Activated CD8-positive, alpha-beta T cell treated with anti-CD3 and anti-CD28 coated beads, Interleukin-2, amount 10 ng/mL, durations not matched to agents 7 days and 5 days (primary cell): ENCODE measurements at regions of chr2 and their contacts with region 1.

Region 1: DNA sequence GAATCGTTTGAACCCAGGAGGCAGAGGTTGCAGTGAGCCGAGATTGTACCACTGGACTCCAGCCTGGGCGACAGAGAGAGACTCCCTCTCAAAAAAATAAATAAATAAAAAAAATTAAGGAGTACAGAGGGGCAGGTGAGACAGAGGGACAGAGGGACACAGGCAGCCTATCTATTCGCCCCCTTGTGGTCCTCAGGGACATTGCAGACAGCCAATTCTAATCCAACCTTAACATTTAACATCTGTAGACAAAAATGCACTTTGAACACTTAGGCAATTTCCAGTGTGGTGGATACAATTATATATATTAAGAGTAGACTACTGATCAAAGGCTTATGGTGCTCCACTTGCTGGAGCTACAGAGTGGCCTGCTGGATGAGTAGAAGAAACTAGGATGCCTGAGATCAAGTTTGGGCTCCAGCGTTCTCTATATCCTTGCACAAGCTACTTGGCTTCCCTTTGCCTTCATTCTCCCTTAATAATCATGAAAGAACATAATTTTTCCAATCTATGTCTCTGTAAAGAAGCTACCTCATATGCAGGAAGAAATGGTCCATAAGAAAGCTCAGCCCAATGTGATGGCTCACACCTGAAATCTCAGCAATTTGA is 8.2 kb upstream of the SMARCAL1 start:
- DNase-seq: peak; percentile 63
- ATAC-seq: peak; percentile 88
- H3K4me3 Mint-ChIP-seq: no peak overlapping the region
- H3K27ac Mint-ChIP-seq: no peak overlapping the region
- H3K4me1 Mint-ChIP-seq: no peaks in the 10 kb centered on the region
- H3K27me3 Mint-ChIP-seq: peaks cover 25% of the 10 kb centered on the region

Region 2: DNA sequence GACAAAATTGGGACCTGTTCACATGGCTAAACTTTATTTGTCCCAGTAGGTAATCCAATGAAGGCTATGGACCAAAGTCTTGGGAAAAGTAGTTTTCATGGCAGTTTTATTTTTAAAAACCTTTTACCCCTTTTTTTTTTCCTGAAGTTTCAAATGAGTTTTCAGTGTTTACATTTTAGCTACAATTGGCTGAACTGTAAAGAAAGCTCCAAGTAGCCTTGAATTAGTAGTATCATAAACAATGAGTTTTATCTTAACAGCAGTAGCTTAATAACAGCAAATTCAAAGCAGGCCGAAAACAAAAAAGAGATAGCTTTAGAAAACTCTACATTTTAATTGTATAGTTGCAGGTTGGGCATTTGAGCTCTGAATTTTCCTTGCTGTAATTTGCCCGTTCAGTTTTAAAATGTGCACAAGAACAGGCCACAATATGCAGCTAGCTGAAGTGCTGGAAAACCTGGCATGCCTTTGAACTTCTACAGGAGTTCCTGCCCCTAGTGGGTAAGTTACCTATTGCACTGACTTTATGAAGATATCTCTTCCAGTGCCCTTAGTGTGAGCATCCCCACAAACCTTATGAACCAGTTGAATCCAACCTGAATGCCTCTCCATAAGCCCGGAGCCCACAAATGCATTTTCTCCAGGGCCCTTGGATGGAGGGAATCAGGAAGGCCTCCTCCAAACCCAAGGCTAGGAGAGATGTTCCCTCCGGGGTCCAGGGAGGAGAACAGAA is 188.3 kb before region 1 on chr2:
- CTCF ChIA-PET with region 1: interaction called, 10 read pairs
- POLR2A ChIA-PET with region 1: no interaction called
- DNase-seq: peak; percentile 18
- ATAC-seq: no peak
- H3K4me3 Mint-ChIP-seq: no peak overlapping the region
- H3K27ac Mint-ChIP-seq: no peak overlapping the region
- H3K4me1 Mint-ChIP-seq: peaks cover 41% of the 10 kb centered on the region
- H3K27me3 Mint-ChIP-seq: no peaks in the 10 kb centered on the region

Region 3: DNA sequence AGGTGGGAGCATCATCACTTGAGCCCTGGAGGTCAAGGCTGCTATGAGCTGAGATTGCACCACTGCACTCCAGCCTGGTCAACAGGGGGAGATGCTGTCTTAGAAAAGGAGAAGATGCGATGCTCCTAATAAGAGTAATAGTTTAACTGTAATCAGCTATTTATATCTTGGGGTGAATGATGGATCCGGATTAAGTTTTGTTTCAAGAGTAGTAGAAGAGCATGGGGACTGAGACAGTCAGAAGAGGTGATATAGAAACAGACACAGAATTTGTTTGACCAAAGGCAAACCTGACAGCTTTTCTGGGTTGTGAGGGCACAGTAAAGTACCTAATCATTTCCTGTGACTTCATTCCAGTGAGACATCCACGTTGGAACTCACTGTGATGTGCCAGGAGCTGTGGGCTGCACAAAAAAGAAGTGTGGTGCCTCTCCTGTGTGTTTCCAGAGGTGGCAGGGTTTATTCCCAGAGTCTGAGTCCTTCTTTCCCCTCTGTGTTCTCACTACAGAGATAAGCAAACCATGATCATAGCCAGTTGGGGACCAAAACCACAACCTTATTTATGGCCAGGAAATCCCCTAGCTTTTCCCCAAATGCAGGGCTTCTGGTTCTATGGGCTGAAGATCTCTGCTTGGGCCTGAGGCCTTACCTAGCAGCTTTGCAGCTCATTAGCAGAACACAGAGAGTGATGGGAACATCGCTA is 181.3 kb before region 1 on chr2:
- CTCF ChIA-PET with region 1: interaction called, 25 read pairs
- POLR2A ChIA-PET with region 1: interaction called, 7 read pairs
- DNase-seq: no peak
- ATAC-seq: peak; percentile 27
- H3K4me3 Mint-ChIP-seq: no peak overlapping the region
- H3K27ac Mint-ChIP-seq: no peak overlapping the region
- H3K4me1 Mint-ChIP-seq: peaks cover 48% of the 10 kb centered on the region
- H3K27me3 Mint-ChIP-seq: no peaks in the 10 kb centered on the region

Region 4: DNA sequence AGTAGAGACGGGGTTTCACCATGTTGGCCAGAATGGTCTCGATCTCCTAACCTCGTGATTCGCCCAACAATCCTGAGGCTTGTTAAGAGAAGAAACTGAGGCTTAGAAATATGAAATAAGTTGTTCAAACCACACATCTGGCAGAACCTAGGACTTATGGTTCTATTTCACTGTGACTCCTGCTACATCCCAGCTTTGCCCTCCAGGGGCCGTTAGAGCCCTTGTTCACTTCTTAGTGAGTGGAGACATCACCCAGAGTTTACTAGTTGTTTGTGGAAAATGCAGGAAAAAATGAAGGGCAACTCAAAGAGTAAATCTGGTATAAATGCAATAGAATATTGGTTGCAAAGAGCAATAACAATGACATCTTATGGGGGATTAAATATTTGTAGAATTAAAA is 75.8 kb before region 1 on chr2:
- CTCF ChIA-PET with region 1: interaction called, 22 read pairs
- POLR2A ChIA-PET with region 1: no interaction called
- DNase-seq: no peak
- ATAC-seq: no peak
- H3K4me3 Mint-ChIP-seq: no peak overlapping the region
- H3K27ac Mint-ChIP-seq: no peak overlapping the region
- H3K4me1 Mint-ChIP-seq: no peaks in the 10 kb centered on the region
- H3K27me3 Mint-ChIP-seq: peaks cover 4% of the 10 kb centered on the region

Region 5: GRCh38 chr2:216352653-216353270 is 51.4 kb before region 1 on chr2:
- CTCF ChIA-PET with region 1: interaction called, 20 read pairs
- POLR2A ChIA-PET with region 1: no interaction called
- DNase-seq: peak; percentile 53
- ATAC-seq: peak; percentile 77
- H3K4me3 Mint-ChIP-seq: peak overlapping the region; percentile 59
- H3K27ac Mint-ChIP-seq: peak overlapping the region; percentile 98
- H3K4me1 Mint-ChIP-seq: peaks cover 63% of the 10 kb centered on the region
- H3K27me3 Mint-ChIP-seq: no peaks in the 10 kb centered on the region

Region 6: GRCh38 chr2:216416571-216417307 is 12.6 kb after region 1 on chr2:
- CTCF ChIA-PET with region 1: interaction called, 20 read pairs
- POLR2A ChIA-PET with region 1: no interaction called
- DNase-seq: no peak
- ATAC-seq: no peak
- H3K4me3 Mint-ChIP-seq: no peak overlapping the region
- H3K27ac Mint-ChIP-seq: no peak overlapping the region
- H3K4me1 Mint-ChIP-seq: peaks cover 26% of the 10 kb centered on the region
- H3K27me3 Mint-ChIP-seq: no peaks in the 10 kb centered on the region